ENCODE measurements at regions of chr2 and their contacts with region 1.

Region 1: DNA sequence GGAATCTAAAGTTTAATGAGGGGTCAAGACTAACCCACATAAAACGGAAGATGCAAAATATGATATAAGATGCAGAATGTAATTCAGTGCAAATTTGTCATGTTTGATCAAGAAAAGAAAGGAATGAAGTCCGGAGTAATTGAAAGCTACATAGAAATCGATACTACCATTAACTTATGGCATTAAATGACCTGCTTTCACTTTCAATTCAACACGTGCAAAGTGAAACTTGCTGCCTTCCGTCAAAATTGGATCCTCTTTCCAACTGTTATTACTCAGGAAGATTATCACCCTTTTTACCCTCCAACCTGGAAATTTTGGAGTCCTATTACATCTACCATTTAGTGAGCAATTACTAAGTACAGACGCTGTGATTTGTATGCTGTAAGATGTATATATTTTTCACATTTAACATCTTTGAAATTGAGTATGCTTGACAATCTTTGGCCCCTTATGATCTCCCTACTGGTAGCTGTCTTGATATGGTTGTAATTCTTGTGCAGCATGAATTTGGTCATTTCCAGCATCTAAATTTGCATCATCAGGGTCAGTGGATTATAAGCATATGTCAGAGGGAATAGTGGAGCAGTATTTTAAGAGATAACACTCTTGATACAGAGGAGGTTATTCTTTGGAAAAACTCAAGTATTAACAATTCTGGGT is 18.6 kb downstream of the UNC80 start:
- DNase-seq: no peak
- H3K4me3 ChIP-seq: no peak overlapping the region
- H3K27ac ChIP-seq: no peak overlapping the region
- H3K4me1 ChIP-seq: peaks cover 0 to 4% (median 0%) of the 10 kb centered on the region in 4 experiments; a peak in 1 of 7 replicates
- H3K27me3 ChIP-seq: no peaks in the 10 kb centered on the region
- CTCF ChIP-seq: no peak
- EP300 ChIP-seq: no peak
- POLR2A ChIP-seq: no peak
- RAD21 ChIP-seq: no peak

Region 2: DNA sequence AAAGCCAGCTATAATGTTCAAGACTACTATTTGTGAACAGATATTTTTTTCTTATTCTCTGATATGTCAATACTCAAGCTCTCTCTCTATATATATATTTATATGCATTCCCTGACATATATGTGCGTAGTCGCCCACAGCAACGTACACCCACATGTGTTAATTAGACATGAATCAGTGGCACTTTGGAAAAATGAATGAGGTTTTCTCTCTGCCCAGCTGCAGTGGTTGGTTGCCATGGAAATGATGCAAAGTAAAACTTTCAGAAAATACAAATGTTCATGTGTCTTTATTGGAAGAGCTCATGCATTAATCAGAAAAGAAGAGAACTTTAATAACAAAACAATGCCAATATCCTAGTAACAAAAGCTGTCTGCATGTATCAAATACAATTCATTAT is 16.1 kb after region 1 on chr2:
- CTCF ChIA-PET with region 1: interaction called, 11 read pairs
- POLR2A ChIA-PET with region 1: no interaction called
- DNase-seq: no peak
- H3K4me3 ChIP-seq: no peak overlapping the region
- H3K27ac ChIP-seq: no peak overlapping the region
- H3K4me1 ChIP-seq: no peaks in the 10 kb centered on the region
- H3K27me3 ChIP-seq: no peaks in the 10 kb centered on the region
- CTCF ChIP-seq: no peak
- EP300 ChIP-seq: no peak
- POLR2A ChIP-seq: no peak
- RAD21 ChIP-seq: no peak

Region 3: DNA sequence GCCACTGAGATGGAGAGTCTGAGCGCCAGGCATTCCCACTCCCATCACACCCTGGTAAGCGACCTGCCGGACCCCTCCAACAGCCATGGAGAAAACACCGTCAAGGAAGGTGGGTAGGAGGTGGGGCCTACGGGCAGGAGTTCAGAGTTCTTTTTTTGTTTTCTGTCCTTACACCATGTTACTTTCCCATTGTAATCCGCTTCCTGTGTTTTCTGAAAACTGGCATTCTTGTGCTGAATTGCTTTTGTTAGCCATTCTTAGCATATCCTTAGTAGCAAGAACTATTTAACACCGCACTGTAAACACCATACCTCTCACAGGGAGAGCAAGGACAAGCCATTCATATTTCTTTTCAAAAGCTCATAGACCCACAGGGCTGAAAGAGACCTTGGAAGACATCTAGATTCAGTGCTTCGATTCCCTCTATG is 27.7 kb after region 1 on chr2:
- CTCF ChIA-PET with region 1: interaction called, 12 read pairs
- POLR2A ChIA-PET with region 1: no interaction called
- DNase-seq: peak in 1 of 2 experiments; percentile 63
- H3K4me3 ChIP-seq: peak overlapping the region in 1 of 4 experiments; percentile 6; a peak in 1 of 8 replicates
- H3K27ac ChIP-seq: peak overlapping the region; percentile 54
- H3K4me1 ChIP-seq: peaks cover 0 to 15% (median 5%) of the 10 kb centered on the region in 4 experiments; a peak in 4 of 7 replicates
- H3K27me3 ChIP-seq: peaks cover 0 to 2% (median 0%) of the 10 kb centered on the region in 4 experiments; a peak in 1 of 7 replicates
- CTCF ChIP-seq: no peak
- EP300 ChIP-seq: peak in 1 of 2 experiments; percentile 66; a peak in 1 of 3 replicates
- POLR2A ChIP-seq: 0 out of 3 replicates have a peak, but pooled peaks of 1 of the 2 experiments have one; percentile 11
- RAD21 ChIP-seq: no peak